Gastrocnemius medialis (tissue), 4 donors: ENCODE measurements at regions of chr7 and their contacts with region 1.

Region 1: GRCh38 chr7:100266576-100267354 is 40.7 kb upstream of the SPDYE3 start:
- DNase-seq: no peak
- ATAC-seq: no peak
- H3K4me3 ChIP-seq: peak overlapping the region in 1 of 4 donors; percentile 23
- H3K27ac ChIP-seq: peak overlapping the region; percentile 91 to 98 (median 96)
- H3K4me1 ChIP-seq: peaks cover 47 to 54% of the 10 kb centered on the region in 2 donors
- H3K27me3 ChIP-seq: no peaks in the 10 kb centered on the region
- CTCF ChIP-seq: no peak
- POLR2A ChIP-seq: no peak

Region 2: DNA sequence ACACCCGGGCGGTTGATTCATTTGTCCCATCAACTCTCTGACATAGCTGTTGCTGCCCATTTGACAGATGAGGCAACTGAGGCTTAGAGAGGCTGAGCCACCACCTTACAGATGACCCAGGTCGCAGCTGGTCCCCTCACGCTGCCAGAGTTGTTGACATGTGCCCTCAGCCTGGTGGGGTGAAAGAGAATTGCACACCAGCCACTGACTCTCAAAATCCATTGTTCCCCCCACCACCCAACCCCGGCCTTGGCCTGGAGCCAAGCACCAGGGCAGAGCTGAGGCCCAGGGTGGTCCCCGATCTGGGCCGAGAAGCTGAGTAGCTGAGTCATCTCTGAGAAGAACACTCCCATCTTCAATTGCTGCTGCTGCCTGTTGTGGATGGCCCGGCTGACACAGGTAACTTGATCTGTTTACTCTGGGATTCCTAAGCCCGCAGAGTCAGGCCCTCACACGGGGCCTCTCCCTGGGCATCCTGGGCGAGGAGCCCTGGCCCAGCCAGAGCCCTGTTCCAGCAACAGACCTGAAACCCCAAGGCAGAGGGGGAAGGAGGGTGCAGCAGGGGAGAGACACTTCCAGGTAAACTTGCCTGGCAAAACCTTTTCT is 19.5 kb before region 1 on chr7:
- in situ Hi-C with region 1: no loop called
- intact Hi-C with region 1: loop called (anchors 2 kb)
- DNase-seq: peak; percentile 91 to 95
- ATAC-seq: peak; percentile 55 to 56
- H3K4me3 ChIP-seq: no peak overlapping the region
- H3K27ac ChIP-seq: peak overlapping the region; percentile 98 to 100 (median 98)
- H3K4me1 ChIP-seq: peaks cover 61 to 67% of the 10 kb centered on the region in 2 donors
- H3K27me3 ChIP-seq: no peaks in the 10 kb centered on the region
- CTCF ChIP-seq: peak in 4 of 5 experiments; percentile 10 to 71 (median 28)
- POLR2A ChIP-seq: peak; percentile 30 to 68

Region 3: GRCh38 chr7:101138213-101138870 is 871.6 kb after region 1 on chr7:
- in situ Hi-C with region 1: no loop called
- intact Hi-C with region 1: no loop called
- DNase-seq: peak; percentile 65 to 84
- ATAC-seq: peak; percentile 91 to 98
- H3K4me3 ChIP-seq: peak overlapping the region in 3 of 4 donors; percentile 10 to 27 (median 18)
- H3K27ac ChIP-seq: peak overlapping the region; percentile 47 to 69 (median 67)
- H3K4me1 ChIP-seq: peaks cover 0 to 8% of the 10 kb centered on the region in 2 donors
- H3K27me3 ChIP-seq: no peaks in the 10 kb centered on the region
- CTCF ChIP-seq: peak; percentile 67 to 82 (median 76)
- POLR2A ChIP-seq: no peak